ENCODE measurements at regions of chrX and their contacts with region 1.

Region 1: GRCh38 chrX:153947009-153947769 is 2.7 kb upstream of the RENBP start:
- DNase-seq: no peak
- ATAC-seq: peak; percentile 90
- H3K4me3 ChIP-seq: no peak overlapping the region
- H3K27ac ChIP-seq: peak overlapping the region; percentile 56
- H3K4me1 ChIP-seq: peaks cover 22% of the 10 kb centered on the region
- H3K27me3 ChIP-seq: no peaks in the 10 kb centered on the region
- CTCF ChIP-seq: no peak

Region 2: GRCh38 chrX:153744214-153744724 is 202.9 kb before region 1 on chrX:
- CTCF ChIA-PET with region 1: no interaction called
- POLR2A ChIA-PET with region 1: no interaction called
- in situ Hi-C with region 1: no loop called
- intact Hi-C with region 1: no loop called
- DNase-seq: no peak
- ATAC-seq: no peak
- H3K4me3 ChIP-seq: no peak overlapping the region
- H3K27ac ChIP-seq: no peak overlapping the region
- H3K4me1 ChIP-seq: no peaks in the 10 kb centered on the region
- H3K27me3 ChIP-seq: no peaks in the 10 kb centered on the region
- CTCF ChIP-seq: no peak; the same call in 1 of the 2 replicates

Region 3: DNA sequence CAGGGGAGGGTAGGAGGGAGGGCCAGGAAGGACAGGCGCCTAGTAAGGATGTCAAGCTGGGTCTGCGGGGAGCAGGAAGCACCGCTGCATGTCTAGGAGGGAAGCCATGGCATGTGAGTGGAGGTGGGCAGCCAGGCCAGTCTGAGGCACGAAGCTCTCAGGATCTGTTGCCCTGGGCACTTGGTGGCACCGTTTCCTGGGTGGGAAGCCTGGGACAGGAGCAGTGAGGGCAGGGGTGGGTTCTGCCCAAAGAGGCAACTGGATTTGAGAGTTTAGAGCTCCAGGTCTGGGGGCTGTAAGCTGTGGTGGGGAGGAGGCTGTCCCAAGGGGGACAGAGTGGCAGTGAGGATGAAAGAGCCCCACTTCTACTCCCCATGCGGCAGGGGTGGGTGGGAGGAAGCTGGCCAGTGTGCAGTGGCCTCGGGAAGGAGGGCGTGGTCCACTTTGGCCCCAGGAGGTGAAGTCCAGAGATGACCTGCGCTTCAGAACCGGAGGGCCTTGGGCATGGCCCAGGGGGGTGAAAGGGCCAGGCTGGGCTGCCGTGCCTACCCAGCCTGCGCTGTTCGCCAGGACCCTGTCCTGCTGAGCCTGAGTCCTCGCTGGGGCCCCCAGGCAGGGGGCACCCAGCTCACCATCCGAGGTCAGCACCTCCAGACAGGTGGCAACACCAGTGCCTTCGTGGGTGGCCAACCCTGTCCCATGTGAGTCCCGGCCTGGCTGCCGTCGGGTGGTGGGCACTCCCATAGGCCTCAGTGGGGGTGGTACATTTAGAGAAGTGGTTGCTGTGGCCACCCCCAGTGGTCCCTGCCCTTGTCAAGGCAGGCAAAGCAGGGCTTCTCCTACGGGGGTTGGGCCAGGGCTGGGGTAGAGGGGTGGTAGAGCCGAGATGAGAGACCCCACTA is 174.6 kb before region 1 on chrX:
- CTCF ChIA-PET with region 1: no interaction called
- POLR2A ChIA-PET with region 1: interaction called, 11 read pairs
- in situ Hi-C with region 1: no loop called
- intact Hi-C with region 1: no loop called
- DNase-seq: no peak
- ATAC-seq: no peak
- H3K4me3 ChIP-seq: no peak overlapping the region
- H3K27ac ChIP-seq: no peak overlapping the region
- H3K4me1 ChIP-seq: no peaks in the 10 kb centered on the region
- H3K27me3 ChIP-seq: no peaks in the 10 kb centered on the region
- CTCF ChIP-seq: no peak

Region 4: GRCh38 chrX:153900831-153901752 is 46.1 kb before region 1 on chrX:
- CTCF ChIA-PET with region 1: no interaction called
- POLR2A ChIA-PET with region 1: no interaction called
- in situ Hi-C with region 1: no loop called
- intact Hi-C with region 1: no loop called
- DNase-seq: no peak
- ATAC-seq: peak; percentile 69
- H3K4me3 ChIP-seq: peak overlapping the region in 1 of 2 experiments; percentile 25; a peak in 1 of 4 replicates
- H3K27ac ChIP-seq: peak overlapping the region; percentile 76
- H3K4me1 ChIP-seq: peaks cover 47% of the 10 kb centered on the region
- H3K27me3 ChIP-seq: no peaks in the 10 kb centered on the region
- CTCF ChIP-seq: no peak